GM12878 (cell line): ENCODE measurements at regions of chr1 and their contacts with region 1.

Region 1: DNA sequence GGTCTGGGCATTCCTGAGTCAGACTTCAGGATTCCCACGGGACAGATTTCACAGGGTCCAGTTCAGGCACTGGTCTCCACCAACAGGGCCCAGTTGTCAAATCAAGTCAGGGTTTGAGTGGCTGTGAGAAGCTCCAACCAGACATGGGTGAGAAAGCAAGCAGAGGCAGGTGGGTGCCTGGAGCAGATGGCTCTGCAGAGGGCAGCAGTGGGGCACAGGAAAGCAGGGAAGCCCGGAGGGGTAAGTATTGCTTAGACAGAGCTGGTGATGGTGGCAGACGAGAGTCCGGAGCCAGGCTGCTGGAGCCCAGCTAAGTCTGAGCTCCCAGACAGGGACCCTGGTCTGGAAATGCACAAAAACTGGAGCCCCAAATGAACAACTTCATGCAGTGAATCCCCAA is 40.4 kb downstream of the RIMS3 start:
- DNase-seq: no peak
- ATAC-seq: peak; percentile 35
- H3K4me3 ChIP-seq: no peak overlapping the region
- H3K27ac ChIP-seq: no peak overlapping the region
- H3K4me1 ChIP-seq: peaks cover 15% of the 10 kb centered on the region
- H3K27me3 ChIP-seq: no peaks in the 10 kb centered on the region
- CTCF ChIP-seq: peak in 2 of 3 experiments; percentile 44 to 45; a peak in 3 of 6 replicates
- EP300 ChIP-seq: no peak
- POLR2A ChIP-seq: no peak
- RAD21 ChIP-seq: peak; percentile 20; the same call in 1 of the 2 replicates

Region 2: GRCh38 chr1:40662864-40663263 is 37.8 kb after region 1 on chr1:
- CTCF ChIA-PET with region 1: interaction called, 21 read pairs
- POLR2A ChIA-PET with region 1: interaction called, 6 read pairs
- RAD21 ChIA-PET with region 1: interaction called, 5 read pairs
- SMC1A ChIA-PET with region 1: interaction called, 4 read pairs
- in situ Hi-C with region 1: no loop called
- intact Hi-C with region 1: loop called (anchors 5 kb)
- DNase-seq: no peak
- ATAC-seq: no peak
- H3K4me3 ChIP-seq: no peak overlapping the region
- H3K27ac ChIP-seq: no peak overlapping the region
- H3K4me1 ChIP-seq: peaks cover 3% of the 10 kb centered on the region; the same call in 1 of the 2 replicates
- H3K27me3 ChIP-seq: no peaks in the 10 kb centered on the region
- CTCF ChIP-seq: no peak
- EP300 ChIP-seq: no peak
- POLR2A ChIP-seq: no peak
- RAD21 ChIP-seq: no peak